Activated CD4-positive, alpha-beta memory T cell treated with anti-CD3 and anti-CD28 coated beads for 36 hours (primary cell): ENCODE measurements at regions of chr17 and their contacts with region 1.

Region 1: DNA sequence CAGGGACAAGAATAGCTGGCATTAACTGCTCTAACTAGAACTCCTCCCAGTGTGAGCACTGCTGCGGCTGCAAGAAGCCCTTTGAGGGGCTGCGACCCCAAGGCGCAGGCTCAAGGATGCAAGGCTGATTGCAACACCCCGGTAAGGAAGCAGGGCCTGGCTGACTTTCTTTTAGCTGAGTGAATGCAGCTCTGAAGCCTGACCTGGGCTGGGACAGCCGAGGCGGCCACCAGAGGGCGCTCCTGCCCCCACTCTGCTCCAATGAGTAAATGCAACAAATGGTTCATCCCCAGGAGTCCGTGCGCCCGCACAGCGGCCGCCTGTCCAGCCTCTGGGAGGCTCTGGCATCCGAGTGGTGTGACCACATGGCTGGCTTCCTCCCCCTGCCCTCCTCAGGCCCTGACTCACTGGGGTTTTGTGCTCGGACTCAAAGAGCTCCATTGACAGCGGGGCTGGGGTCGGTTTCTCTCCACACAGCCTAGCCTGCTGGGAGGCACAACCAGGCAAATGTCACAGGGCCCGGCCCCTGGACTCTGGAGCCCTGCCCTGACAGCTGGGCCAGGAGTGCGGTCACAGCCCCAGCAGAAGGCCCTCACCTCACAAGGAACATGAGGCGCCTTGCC is at the start of gene SMIM5:
- DNase-seq: peak; percentile 87
- H3K4me3 Mint-ChIP-seq: no peak within 1 kb of the TSS
- H3K27ac Mint-ChIP-seq: no peak within 1 kb of the TSS
- H3K4me1 Mint-ChIP-seq: no peaks in the 10 kb centered on the region
- H3K27me3 Mint-ChIP-seq: no peaks in the 10 kb centered on the region
- total RNA-seq, gene SMIM5: not detected

Region 2: DNA sequence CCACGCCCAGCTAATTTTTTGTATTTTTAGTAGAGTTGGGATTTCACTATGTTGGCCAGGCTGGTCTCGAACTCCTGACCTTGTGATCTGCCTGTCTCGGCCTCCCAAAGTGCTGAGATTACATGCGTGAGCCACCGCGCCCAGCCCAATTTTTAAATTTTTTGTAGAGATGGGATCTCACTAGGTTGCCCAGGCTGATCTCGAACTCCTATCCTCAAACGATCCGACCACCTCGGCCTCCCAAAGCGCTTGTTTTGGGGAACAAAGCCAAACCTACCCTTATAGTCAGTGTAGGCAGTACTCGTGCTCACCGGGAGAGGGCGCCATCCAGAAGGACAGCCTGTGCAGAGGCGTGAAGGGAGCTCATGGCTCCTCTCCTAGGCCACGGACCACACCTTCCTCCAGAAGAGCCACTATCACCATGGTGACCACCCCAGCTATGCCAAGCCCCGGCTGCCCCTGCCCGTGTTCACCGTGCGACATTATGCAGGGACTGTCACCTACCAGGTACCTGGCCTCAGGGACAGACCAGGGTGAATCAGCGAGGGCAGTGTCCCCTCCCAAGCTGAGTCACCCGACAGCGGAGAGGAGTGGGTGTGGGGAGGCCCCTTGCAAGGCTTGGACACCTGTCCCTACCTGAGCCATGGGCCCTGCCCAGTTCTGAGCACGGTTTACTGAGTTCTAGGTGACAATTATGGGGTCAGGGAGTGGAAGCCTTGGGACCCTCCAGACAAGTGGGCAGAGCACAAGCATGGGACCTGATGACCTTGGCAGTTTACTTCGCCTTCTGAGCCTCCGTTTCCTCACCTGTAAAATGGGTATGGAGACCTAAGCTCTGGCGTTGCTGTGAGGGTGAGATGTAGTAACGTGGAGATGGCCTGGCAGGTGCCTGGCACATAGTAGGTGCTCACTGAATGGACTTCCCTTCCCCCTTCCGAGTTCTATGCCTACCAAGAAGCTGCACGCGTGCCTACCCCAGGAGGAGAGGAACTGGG is 31.6 kb before region 1 on chr17:
- CTCF ChIA-PET with region 1: interaction called, 19 read pairs
- POLR2A ChIA-PET with region 1: no interaction called
- intact Hi-C with region 1: no loop called
- DNase-seq: peak; percentile 75
- H3K4me3 Mint-ChIP-seq: no peak overlapping the region
- H3K27ac Mint-ChIP-seq: no peak overlapping the region
- H3K4me1 Mint-ChIP-seq: no peaks in the 10 kb centered on the region
- H3K27me3 Mint-ChIP-seq: no peaks in the 10 kb centered on the region

Region 3: DNA sequence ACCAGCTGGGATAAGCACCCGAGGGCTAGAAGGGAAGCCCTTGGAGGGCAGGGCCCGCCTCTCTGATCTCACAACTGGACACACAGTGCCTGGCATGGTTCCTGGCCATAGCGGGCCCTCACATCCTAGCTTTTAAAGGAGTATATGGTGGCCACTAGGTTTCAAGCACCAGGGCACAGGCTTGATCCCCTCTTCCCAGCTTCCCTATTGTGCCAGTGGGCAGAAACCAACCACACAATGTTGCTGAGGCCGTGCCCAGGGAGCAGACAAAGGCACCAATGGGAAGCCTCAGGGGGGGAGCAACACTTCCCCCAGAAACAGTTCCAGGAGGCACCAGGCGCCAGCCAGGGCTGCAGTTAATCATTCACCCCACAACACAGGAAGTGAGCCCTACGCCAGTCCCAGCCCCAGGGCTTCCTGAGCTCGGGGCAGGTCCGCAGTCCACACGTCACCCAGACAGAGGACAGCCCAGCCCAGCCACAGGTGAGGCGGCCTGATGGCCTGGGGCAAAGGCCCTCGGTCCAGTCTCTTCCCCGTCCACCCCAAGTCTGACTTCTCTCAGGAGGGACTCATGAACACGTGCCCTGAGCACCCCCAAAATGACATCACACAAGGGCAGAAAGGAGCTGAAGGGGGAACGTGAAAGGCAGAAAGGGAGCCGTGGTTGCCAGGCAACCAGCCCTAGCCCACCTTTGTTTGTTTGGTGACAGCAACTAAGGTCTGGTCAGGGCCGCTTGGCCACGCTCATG is 13.1 kb after region 1 on chr17:
- CTCF ChIA-PET with region 1: interaction called, 70 read pairs
- POLR2A ChIA-PET with region 1: no interaction called
- intact Hi-C with region 1: no loop called
- DNase-seq: peak; percentile 15
- H3K4me3 Mint-ChIP-seq: no peak overlapping the region
- H3K27ac Mint-ChIP-seq: no peak overlapping the region
- H3K4me1 Mint-ChIP-seq: peaks cover 5% of the 10 kb centered on the region
- H3K27me3 Mint-ChIP-seq: no peaks in the 10 kb centered on the region

Region 4: GRCh38 chr17:75673487-75673886 is 40.5 kb after region 1 on chr17:
- CTCF ChIA-PET with region 1: interaction called, 15 read pairs
- POLR2A ChIA-PET with region 1: no interaction called
- intact Hi-C with region 1: no loop called
- DNase-seq: no peak
- H3K4me3 Mint-ChIP-seq: no peak overlapping the region
- H3K27ac Mint-ChIP-seq: no peak overlapping the region
- H3K4me1 Mint-ChIP-seq: peaks cover 26% of the 10 kb centered on the region
- H3K27me3 Mint-ChIP-seq: no peaks in the 10 kb centered on the region

Region 5: DNA sequence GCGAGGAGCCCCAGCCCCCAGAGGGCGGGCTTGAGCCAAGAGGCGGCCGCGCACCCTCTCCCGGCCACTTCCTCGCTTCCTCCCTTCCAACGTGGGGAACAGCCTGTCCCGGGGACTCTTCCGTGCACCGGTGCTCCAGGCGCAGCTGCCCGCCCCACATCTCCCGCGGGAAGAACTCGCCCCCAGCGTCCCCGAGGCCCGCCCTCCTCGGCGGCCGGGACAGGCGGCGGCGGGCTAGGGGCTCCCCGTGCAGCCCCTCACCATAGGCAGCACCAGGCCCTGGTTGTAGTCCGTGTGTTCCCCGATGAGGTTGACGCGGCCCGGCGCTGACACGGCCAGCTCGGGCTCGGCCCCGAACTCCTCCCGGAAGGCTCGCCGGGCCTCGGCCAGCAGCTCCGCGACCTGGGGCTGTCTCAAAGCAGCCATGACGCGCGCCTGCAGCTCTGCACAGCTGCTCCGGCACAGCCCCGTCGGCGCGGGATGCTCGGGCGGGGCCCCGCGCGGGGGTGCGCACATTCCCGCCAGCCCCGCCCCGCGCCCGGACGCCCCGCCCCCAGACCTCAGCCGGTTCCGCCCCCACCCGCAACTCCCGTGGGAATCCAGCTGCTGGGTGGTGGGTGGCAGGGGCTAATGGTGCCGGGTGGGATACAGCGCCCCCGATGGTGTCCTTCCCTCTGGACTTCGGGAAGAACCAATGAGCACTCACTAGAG is 131.9 kb after region 1 on chr17 and contains the start of gene GALK1:
- CTCF ChIA-PET with region 1: interaction called, 13 read pairs
- POLR2A ChIA-PET with region 1: no interaction called
- intact Hi-C with region 1: no loop called
- DNase-seq: peak; percentile 83
- H3K4me3 Mint-ChIP-seq: peak within 1 kb of the TSS; percentile 79
- H3K27ac Mint-ChIP-seq: peak within 1 kb of the TSS; percentile 71
- H3K4me1 Mint-ChIP-seq: peaks cover 11% of the 10 kb centered on the region
- H3K27me3 Mint-ChIP-seq: no peaks in the 10 kb centered on the region
- total RNA-seq, gene GALK1: 69.3 to 69.7 TPM

Region 6: DNA sequence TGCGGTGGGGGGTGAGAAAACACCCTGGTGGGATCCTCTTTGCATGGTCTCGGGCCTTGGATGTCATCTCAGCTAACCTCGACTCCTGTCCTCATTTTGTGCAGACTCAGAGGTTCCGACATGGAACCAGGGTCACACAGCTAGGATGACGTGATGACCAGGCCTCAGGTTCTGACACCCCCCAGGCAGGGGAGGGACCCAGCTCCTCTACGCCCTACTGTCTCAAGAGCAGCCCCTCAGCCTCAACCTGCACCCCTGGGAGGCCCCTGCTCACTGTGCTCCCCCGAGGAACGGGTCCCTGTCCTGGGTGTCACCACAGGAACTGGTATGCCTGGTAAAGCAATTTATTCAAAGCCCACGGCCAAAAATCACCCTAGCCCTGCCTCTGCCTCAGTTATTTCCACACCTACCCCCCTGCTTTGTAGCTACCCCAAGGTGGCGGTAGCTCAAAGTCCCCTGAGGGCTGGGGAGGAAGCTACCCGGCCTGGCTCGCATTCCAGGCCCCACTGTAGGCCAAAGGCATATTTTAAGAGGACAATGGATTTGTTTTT is 193.8 kb after region 1 on chr17:
- CTCF ChIA-PET with region 1: no interaction called
- POLR2A ChIA-PET with region 1: no interaction called
- intact Hi-C with region 1: no loop called
- DNase-seq: no peak
- H3K4me3 Mint-ChIP-seq: no peak overlapping the region
- H3K27ac Mint-ChIP-seq: peak overlapping the region; percentile 62
- H3K4me1 Mint-ChIP-seq: peaks cover 16% of the 10 kb centered on the region
- H3K27me3 Mint-ChIP-seq: no peaks in the 10 kb centered on the region

Region 7: GRCh38 chr17:75896415-75897159 is 263.6 kb after region 1 on chr17 and contains the start of gene TRIM65:
- CTCF ChIA-PET with region 1: no interaction called
- POLR2A ChIA-PET with region 1: no interaction called
- intact Hi-C with region 1: no loop called
- DNase-seq: peak; percentile 87
- H3K4me3 Mint-ChIP-seq: peak within 1 kb of the TSS; percentile 84
- H3K27ac Mint-ChIP-seq: peak within 1 kb of the TSS; percentile 72
- H3K4me1 Mint-ChIP-seq: peaks cover 24% of the 10 kb centered on the region
- H3K27me3 Mint-ChIP-seq: no peaks in the 10 kb centered on the region
- total RNA-seq, gene TRIM65: 27.5 to 28.2 TPM

Region 8: GRCh38 chr17:76124582-76125390 is 491.8 kb after region 1 on chr17:
- CTCF ChIA-PET with region 1: no interaction called
- POLR2A ChIA-PET with region 1: no interaction called
- intact Hi-C with region 1: no loop called
- DNase-seq: peak; percentile 29
- H3K4me3 Mint-ChIP-seq: no peak overlapping the region
- H3K27ac Mint-ChIP-seq: peak overlapping the region; percentile 33
- H3K4me1 Mint-ChIP-seq: peaks cover 12% of the 10 kb centered on the region
- H3K27me3 Mint-ChIP-seq: no peaks in the 10 kb centered on the region